AG04450 (cell line): ENCODE measurements at regions of chr1 and their contacts with region 1.

Region 1: GRCh38 chr1:205354259-205354904 is 2.3 kb downstream of the KLHDC8A start:
- DNase-seq: peak; percentile 56
- H3K4me3 ChIP-seq: no peak overlapping the region
- H3K27ac ChIP-seq: no peak overlapping the region
- H3K27me3 ChIP-seq: peaks cover 17% of the 10 kb centered on the region
- CTCF ChIP-seq: peak; percentile 94

Region 2: GRCh38 chr1:205061665-205062069 is 292.7 kb before region 1 on chr1:
- CTCF ChIA-PET with region 1: no interaction called
- POLR2A ChIA-PET with region 1: no interaction called
- DNase-seq: peak; percentile 3
- H3K4me3 ChIP-seq: no peak overlapping the region
- H3K27ac ChIP-seq: no peak overlapping the region
- H3K27me3 ChIP-seq: peaks cover 26% of the 10 kb centered on the region
- CTCF ChIP-seq: peak; percentile 90

Region 3: GRCh38 chr1:205329719-205330118 is 24.7 kb before region 1 on chr1:
- CTCF ChIA-PET with region 1: interaction called, 54 read pairs
- POLR2A ChIA-PET with region 1: no interaction called
- DNase-seq: no peak
- H3K4me3 ChIP-seq: no peak overlapping the region
- H3K27ac ChIP-seq: no peak overlapping the region
- H3K27me3 ChIP-seq: peaks cover 19% of the 10 kb centered on the region
- CTCF ChIP-seq: no peak

Region 4: DNA sequence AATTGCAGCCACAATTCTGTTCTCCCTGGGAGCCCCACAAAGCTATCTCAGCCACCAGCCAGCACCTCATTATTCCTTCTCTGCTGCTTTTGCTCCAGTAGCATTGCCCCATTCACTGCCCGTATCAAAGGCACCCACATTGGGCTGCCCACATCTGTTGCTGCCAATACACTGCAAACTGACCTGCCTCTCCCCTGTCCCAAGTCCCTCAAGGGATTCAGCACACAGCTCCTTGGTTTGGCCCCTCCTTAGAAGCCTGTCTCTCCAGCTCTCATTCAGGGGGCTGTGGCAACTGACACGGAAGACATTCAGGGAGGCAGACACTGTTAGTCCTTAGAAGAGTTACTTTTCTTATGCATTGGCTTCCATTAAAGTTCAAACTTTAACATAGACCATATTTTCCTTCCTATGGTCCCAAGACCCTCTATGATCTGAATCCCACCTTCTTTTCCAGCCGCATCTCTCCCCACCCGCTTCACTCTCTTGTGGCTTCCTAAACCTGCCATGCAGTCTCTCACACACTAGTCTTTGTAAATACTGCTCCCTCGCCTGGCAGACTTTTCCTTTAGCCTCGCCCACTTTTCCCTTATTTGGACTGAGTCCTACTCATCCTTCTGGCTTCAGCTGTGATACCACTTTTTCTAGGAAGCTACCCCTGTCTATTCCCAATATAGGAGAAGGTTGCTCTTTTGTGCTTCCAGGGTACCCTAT is 21.6 kb after region 1 on chr1:
- CTCF ChIA-PET with region 1: interaction called, 28 read pairs
- POLR2A ChIA-PET with region 1: no interaction called
- DNase-seq: no peak
- H3K4me3 ChIP-seq: no peak overlapping the region
- H3K27ac ChIP-seq: no peak overlapping the region
- H3K27me3 ChIP-seq: peaks cover 5% of the 10 kb centered on the region
- CTCF ChIP-seq: 0 out of 2 replicates have a peak, but pooled peaks have one; percentile 12

Region 5: DNA sequence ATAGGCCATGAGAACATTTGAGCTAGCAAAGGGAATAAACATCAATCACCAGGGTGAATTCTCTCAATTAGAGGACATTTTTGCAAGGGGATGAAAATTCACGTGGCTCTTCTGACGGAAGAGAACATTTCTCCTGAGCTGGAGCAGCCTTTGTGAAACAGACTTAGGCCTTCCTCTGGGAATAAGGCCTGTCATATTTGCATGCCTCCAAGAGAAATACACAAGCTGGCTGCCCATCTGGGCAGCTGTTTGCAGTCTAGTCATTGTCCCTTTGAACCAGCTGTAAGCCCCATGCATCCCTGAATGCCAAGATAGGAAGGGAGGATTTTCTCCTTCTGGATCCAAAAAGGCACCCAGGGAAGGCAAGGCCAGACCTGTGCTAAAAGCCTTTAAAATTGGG is 61.9 kb after region 1 on chr1:
- CTCF ChIA-PET with region 1: interaction called, 12 read pairs
- POLR2A ChIA-PET with region 1: no interaction called
- DNase-seq: no peak
- H3K4me3 ChIP-seq: no peak overlapping the region
- H3K27ac ChIP-seq: no peak overlapping the region
- H3K27me3 ChIP-seq: peaks cover 64% of the 10 kb centered on the region
- CTCF ChIP-seq: no peak

Region 6: DNA sequence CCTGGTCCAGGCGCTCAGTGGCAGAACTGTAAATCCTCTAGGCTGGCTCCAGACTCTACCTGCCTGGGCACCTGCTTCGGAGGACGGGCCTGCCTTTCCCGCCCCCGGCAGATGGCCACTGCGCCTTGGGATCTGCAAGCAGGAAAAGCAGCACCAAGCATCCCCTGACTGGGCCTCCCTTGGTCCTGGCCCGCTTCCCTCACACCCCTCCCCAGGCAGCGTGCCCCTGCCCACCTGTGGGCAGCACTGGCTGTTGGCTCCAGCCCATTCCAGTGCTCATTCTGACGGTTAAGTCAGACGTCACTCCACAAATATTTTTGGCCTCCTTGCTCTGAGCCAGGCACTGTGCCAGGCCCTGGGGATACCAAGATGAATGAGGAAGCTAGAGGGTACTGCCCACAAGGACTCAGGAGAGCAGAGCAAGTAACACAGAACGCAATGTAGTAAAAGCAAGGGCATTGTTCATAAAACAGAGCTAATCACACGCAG is 123.4 kb after region 1 on chr1:
- CTCF ChIA-PET with region 1: interaction called, 165 read pairs
- POLR2A ChIA-PET with region 1: no interaction called
- DNase-seq: no peak
- H3K4me3 ChIP-seq: no peak overlapping the region
- H3K27ac ChIP-seq: no peak overlapping the region
- H3K27me3 ChIP-seq: peaks cover 31% of the 10 kb centered on the region
- CTCF ChIP-seq: no peak

Region 7: DNA sequence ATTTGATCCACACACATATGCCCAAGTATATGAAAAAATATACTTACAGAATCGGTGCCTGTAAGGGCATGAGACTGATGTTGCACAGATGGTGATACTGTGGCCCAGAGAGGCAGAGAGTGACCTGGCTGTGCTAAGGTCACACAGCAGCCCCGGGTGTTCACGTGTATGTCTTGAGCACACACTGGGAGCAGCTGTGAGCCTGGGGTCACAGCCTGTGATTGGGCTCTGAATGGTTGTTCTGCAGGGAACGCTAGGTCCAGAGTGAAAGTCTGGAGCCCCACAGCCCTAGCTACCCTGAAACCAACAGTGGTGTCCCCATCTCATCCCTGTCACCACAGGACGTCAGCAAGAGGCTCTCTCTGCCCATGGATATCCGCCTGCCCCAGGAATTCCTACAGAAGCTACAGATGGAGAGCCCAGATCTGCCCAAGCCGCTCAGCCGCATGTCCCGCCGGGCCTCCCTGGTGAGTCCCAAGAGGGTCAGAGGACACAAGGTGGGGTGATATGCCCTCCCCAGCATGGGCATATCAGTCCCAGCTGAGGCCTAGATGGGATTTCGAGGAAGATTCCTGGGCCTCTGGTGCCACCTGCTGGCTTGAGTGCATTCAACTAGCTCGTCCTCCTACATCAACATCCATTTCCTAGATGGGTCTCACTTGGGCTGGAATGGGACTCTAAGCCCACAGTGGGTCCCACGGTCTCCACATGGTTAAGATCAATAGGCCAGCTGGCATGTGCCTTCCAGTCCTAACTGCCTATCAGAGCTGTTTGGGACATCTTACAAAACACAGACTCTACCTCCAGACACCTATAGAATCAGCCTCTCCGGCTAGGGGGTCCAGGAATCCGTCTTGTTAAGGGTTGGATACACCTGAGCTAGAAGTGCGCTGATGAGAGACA is 169.8 kb after region 1 on chr1:
- CTCF ChIA-PET with region 1: interaction called, 55 read pairs
- POLR2A ChIA-PET with region 1: no interaction called
- DNase-seq: peak; percentile 33
- H3K4me3 ChIP-seq: no peak overlapping the region
- H3K27ac ChIP-seq: no peak overlapping the region
- H3K27me3 ChIP-seq: peaks cover 33% of the 10 kb centered on the region
- CTCF ChIP-seq: peak; percentile 82